Activated naive CD8-positive, alpha-beta T cell treated with anti-CD3 and anti-CD28 coated beads, Interleukin-2, amount 10 ng/mL, durations not matched to agents 7 days and 5 days (primary cell): ENCODE measurements at regions of chr19 and their contacts with region 1.

Region 1: DNA sequence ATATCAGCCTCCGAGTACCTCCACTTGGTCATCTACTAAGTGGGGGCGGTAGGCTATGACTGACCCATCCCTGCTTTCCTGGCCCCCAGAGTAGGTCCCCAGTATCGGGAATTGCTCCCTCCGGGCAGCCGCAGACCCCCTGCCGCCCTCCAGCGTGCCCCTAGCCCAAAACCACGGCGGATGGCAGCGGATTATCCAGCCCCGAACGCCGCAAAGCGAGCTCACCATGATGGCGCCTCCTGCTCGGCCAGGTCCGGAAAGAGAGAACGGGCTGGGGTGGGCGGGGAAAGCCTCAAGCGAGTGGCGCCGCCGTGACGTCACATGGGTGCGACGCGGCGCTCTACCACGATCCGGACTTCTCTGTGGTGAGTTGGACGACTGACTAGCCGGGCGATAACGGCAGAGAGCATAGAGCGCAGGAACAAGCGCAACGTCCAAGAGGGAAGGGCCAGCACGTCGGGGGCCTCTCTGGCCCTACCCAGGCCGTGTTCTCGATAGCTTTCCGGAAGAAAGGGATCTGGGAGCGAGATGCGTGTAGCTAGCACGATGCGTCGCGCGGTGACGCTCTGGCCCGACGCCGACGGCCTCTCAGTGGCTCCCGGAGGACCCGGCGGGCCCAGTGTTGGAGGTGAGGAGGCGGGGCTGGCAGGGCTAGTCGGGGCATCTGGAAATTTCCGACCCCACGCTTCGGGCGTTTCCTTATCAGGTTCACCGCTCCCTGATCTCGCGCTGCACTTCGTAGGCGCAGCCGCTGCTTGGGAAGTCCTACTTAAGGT is at the starts of genes RPL18 and SPHK2:
- DNase-seq: peak; percentile 96
- ATAC-seq: peak; percentile 81
- H3K4me3 Mint-ChIP-seq: peak within 1 kb of the TSS; percentile 95
- H3K27ac Mint-ChIP-seq: peak within 1 kb of the TSS; percentile 98
- H3K4me1 Mint-ChIP-seq: peaks cover 39% of the 10 kb centered on the region
- H3K27me3 Mint-ChIP-seq: no peaks in the 10 kb centered on the region
- total RNA-seq, gene RPL18: 1,565 to 1,587 TPM
- total RNA-seq, gene SPHK2: 31.4 to 31.8 TPM

Region 2: DNA sequence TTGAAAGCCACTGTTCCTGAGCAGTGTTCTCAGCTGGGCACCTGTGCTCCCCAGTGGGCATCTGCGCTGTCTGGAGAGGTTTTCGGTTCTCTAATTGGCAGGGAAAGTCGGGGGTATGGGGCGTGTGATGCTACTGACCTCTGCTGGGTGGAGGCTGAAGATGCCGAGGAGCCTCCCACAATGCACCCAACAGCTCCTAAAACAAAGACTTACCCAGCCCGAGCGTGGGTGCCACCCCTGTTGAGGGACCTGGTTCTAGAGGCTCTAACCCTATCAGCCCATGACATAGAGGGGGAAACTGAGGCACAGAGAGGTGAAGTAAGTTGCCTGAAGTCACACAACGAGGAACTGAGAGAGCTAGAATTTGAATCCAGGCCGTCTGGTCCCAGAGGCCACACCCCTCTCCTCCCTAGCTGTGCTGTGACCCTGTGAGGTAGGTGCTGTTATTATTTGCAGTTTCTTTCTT is 10.3 kb before region 1 on chr19:
- POLR2A ChIA-PET with region 1: interaction called, 10 read pairs
- DNase-seq: peak; percentile 56
- ATAC-seq: peak; percentile 90
- H3K4me3 Mint-ChIP-seq: peak overlapping the region; percentile 31
- H3K27ac Mint-ChIP-seq: peak overlapping the region; percentile 62
- H3K4me1 Mint-ChIP-seq: peaks cover 4% of the 10 kb centered on the region
- H3K27me3 Mint-ChIP-seq: no peaks in the 10 kb centered on the region

Region 3: DNA sequence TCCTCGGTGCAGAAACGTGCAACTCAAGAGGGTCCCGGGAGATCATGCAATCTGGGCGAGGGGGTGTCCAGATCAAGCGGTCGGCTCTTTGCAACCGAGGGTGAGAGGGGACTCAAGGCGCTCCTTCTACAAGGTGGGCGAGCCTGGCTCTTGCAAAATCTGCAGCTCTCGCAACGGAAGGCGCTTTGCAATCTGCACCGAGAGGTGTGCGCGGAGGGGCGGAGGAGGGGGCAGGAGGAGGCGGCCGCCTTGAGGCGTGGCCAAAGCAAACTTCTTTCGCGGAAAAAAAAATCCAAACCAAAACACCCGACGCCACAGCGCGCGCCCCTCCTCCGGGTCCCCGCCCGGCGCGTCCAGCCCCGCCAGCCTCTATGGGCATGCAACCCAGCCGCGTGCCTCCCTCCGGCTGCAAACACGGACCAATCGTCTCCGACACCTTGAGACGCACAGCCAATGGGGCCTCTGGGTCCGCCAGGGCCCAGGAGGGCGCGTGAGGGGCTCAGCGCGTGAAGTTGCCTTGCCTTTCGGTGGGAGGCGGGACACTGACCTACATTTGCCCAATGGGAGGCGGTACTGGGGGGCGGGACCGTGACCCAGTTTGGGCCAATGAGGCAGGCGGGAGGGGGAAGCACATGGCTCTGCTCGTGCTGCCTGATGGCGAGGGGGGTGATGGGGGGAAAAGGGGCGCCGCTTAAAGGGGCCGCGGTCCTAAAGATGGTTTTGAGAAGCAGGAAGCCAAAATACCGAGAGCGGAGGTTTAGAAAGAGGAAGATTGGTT is 18.3 kb after region 1 on chr19 and contains the start of gene DBP:
- POLR2A ChIA-PET with region 1: interaction called, 37 read pairs
- DNase-seq: peak; percentile 97
- ATAC-seq: peak; percentile 85
- H3K4me3 Mint-ChIP-seq: peak within 1 kb of the TSS; percentile 92
- H3K27ac Mint-ChIP-seq: peak within 1 kb of the TSS; percentile 99
- H3K4me1 Mint-ChIP-seq: peaks cover 34% of the 10 kb centered on the region
- H3K27me3 Mint-ChIP-seq: no peaks in the 10 kb centered on the region
- total RNA-seq, gene DBP: 34.0 to 34.8 TPM

Region 4: DNA sequence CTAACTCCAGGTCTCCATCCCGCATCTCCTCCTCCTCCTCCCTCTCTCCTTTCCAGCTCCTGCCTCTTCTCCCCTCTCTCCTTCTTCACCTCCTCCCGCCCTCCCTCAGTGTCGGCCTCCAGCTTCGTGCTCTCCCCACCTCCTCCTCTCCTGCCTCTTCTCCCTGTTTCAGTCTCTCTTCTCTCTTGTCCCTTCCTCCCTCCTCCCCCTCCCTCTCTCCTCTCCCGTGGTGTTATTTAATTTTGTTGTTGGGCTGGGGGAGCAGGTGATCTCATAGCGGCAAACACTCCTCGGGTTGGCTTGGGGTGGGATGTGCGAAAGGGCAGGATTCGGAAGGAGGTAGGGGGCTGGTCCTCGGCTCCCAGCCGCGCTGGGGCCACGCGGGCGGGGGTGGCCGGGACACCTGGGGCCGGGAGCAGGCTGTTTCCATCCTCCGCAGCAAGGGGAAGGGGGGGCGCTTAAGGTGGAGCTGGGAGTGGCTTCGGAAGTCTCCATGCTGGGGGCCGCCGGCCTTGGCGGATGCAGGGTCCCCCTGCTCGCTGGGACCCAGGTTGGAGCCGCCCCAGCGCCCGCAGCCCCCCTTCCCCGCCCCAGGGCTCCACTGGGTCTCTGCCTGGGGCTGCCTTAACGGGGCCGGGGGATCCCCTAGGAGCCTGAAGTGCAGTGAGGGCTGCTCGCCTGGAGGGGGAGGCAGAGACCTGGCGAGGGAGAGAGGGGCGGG is 27.1 kb after region 1 on chr19 and contains the start of gene CA11:
- POLR2A ChIA-PET with region 1: interaction called, 16 read pairs
- DNase-seq: peak; percentile 94
- ATAC-seq: peak; percentile 80
- H3K4me3 Mint-ChIP-seq: peak within 1 kb of the TSS; percentile 93
- H3K27ac Mint-ChIP-seq: peak within 1 kb of the TSS; percentile 84
- H3K4me1 Mint-ChIP-seq: peaks cover 37% of the 10 kb centered on the region
- H3K27me3 Mint-ChIP-seq: no peaks in the 10 kb centered on the region
- total RNA-seq, gene CA11: 9.7 to 10.4 TPM